Activated T-helper 1 cell treated with anti-CD3 and anti-CD28 coated beads, Interleukin-12 subunit alpha, Interleukin-12 subunit beta, Interleukin-2, Interleukin-4 antibody, amounts not matched to agents 30 ng/mL and 10 ng/mL and 1 ng/mL, durations not matched to agents 14 hours and 24 hours and 36 hours (primary cell): ENCODE measurements at regions of chr4 and their contacts with region 1.

Region 1: DNA sequence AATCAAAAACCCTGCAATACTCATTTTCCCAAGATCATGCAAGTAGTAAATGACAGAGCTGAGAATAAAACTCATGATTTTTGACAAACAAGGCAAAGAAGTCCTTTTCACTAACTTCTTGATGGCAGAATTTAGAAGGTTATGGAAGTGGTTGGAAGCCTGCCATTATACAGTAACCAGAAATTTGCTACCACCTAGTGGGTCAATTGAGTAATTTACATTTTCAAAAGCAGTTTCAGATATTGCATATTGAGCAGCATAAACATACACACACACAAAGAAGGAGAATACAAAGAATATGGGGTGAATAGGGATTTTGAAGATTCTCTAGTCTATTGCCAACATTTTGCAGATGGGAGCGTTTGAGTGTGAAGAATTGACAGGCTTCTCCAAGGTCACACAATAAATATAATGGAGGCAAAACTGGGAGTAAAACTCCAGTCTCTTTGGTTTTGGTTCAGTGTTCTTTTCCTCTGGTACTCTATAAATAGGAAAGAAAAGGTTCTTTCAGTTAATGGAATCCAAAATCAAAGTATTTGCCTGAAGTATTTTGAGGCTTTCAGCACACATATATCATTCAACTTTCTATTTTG is 70.2 kb downstream of the GC start:
- DNase-seq: no peak
- H3K4me3 Mint-ChIP-seq: no peak overlapping the region
- H3K27ac Mint-ChIP-seq: no peak overlapping the region
- H3K4me1 Mint-ChIP-seq: no peaks in the 10 kb centered on the region
- H3K27me3 Mint-ChIP-seq: peaks cover 5% of the 10 kb centered on the region

Region 2: GRCh38 chr4:70601422-70602039 is 1112.2 kb before region 1 on chr4:
- intact Hi-C with region 1: loop called (anchors 2 kb)
- DNase-seq: peak; percentile 44
- H3K4me3 Mint-ChIP-seq: no peak overlapping the region
- H3K27ac Mint-ChIP-seq: no peak overlapping the region
- H3K4me1 Mint-ChIP-seq: no peaks in the 10 kb centered on the region
- H3K27me3 Mint-ChIP-seq: peaks cover 13% of the 10 kb centered on the region

Region 3: DNA sequence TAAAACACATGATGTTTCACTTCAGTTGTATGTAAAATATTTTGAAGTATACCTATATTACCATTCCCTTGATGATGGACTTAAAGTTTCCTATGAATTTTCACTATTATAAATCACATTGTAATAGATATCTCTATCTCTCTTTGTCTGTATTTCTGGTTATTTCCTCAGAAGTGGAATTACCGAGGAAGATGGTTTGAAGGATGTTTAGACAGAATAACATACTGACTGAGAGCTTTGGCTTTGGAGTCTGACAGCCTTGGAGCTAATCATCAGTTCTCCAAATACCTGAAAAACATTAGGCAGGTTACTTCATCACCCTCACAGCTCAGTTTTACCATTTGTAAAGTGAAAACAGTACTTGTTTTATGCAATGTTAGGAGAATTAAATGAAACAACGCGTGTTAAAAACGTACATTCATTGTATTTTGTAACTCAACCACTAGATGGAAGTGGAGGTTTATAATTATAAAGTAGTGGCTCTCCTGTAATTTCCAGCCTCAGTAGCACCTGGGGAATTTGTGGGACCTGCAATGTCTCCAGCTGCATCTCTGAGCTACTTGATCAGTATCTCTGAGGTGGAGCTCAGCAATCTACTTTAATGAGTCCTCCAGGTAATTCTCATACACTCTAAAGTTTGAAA is 1061.7 kb before region 1 on chr4:
- intact Hi-C with region 1: loop called (anchors 1 kb)
- DNase-seq: no peak
- H3K4me3 Mint-ChIP-seq: no peak overlapping the region
- H3K27ac Mint-ChIP-seq: no peak overlapping the region
- H3K4me1 Mint-ChIP-seq: peaks cover 4% of the 10 kb centered on the region
- H3K27me3 Mint-ChIP-seq: peaks cover 14% of the 10 kb centered on the region

Region 4: GRCh38 chr4:71184195-71184781 is 529.4 kb before region 1 on chr4:
- intact Hi-C with region 1: loop called (anchors 1 kb)
- DNase-seq: no peak
- H3K4me3 Mint-ChIP-seq: no peak overlapping the region
- H3K27ac Mint-ChIP-seq: no peak overlapping the region
- H3K4me1 Mint-ChIP-seq: peaks cover 36% of the 10 kb centered on the region
- H3K27me3 Mint-ChIP-seq: peaks cover 41% of the 10 kb centered on the region

Region 5: GRCh38 chr4:72971572-72971971 is 1257.9 kb after region 1 on chr4:
- intact Hi-C with region 1: no loop called
- DNase-seq: no peak
- H3K4me3 Mint-ChIP-seq: no peak overlapping the region
- H3K27ac Mint-ChIP-seq: no peak overlapping the region
- H3K4me1 Mint-ChIP-seq: no peaks in the 10 kb centered on the region
- H3K27me3 Mint-ChIP-seq: no peaks in the 10 kb centered on the region